PC-9 (cell line): ENCODE measurements at regions of chr4 and their contacts with region 1.

Region 1: DNA sequence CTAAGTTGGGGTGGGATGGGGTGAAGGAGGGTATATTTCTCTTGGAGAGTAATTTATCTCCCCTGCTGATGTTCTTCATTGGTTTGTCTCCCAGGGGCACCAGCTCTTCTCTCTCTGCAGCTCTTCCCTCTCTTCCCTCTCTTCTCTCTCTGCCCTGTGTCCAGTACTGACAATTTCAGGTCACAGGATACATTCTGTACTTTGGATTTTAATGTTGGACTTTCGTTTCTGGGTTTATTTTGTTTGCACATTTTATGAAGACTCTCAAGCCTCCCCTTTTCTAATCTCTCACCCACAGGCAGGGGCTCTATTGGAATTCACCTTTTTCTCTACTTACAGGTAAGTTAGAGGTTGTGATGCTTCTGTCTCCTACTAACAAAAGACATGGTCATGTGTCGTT is 165.5 kb downstream of the CPEB2 start:
- DNase-seq: no peak
- H3K4me3 ChIP-seq: no peak overlapping the region
- H3K27ac ChIP-seq: no peak overlapping the region
- H3K4me1 ChIP-seq: peaks cover 9% of the 10 kb centered on the region
- H3K27me3 ChIP-seq: no peaks in the 10 kb centered on the region
- CTCF ChIP-seq: no peak

Region 2: GRCh38 chr4:14994241-14994640 is 173.5 kb before region 1 on chr4:
- CTCF ChIA-PET with region 1: no interaction called
- POLR2A ChIA-PET with region 1: interaction called, 11 read pairs
- intact Hi-C with region 1: no loop called
- DNase-seq: peak; percentile 21 to 67
- H3K4me3 ChIP-seq: no peak overlapping the region
- H3K27ac ChIP-seq: no peak overlapping the region
- H3K4me1 ChIP-seq: no peaks in the 10 kb centered on the region; the same call in 1 of the 2 replicates
- H3K27me3 ChIP-seq: no peaks in the 10 kb centered on the region
- CTCF ChIP-seq: no peak